Activated CD4-positive, alpha-beta memory T cell treated with anti-CD3 and anti-CD28 coated beads for 36 hours (primary cell): ENCODE measurements at regions of chr12 and their contacts with region 1.

Region 1: GRCh38 chr12:63068857-63069442 is 82.1 kb downstream of the AVPR1A start:
- DNase-seq: no peak
- H3K4me3 Mint-ChIP-seq: no peak overlapping the region
- H3K27ac Mint-ChIP-seq: no peak overlapping the region
- H3K4me1 Mint-ChIP-seq: no peaks in the 10 kb centered on the region
- H3K27me3 Mint-ChIP-seq: no peaks in the 10 kb centered on the region

Region 2: GRCh38 chr12:62813031-62813829 is 255.7 kb before region 1 on chr12:
- CTCF ChIA-PET with region 1: interaction called, 4 read pairs
- POLR2A ChIA-PET with region 1: no interaction called
- intact Hi-C with region 1: loop called (anchors 5 kb)
- DNase-seq: peak; percentile 53
- H3K4me3 Mint-ChIP-seq: no peak overlapping the region
- H3K27ac Mint-ChIP-seq: no peak overlapping the region
- H3K4me1 Mint-ChIP-seq: peaks cover 11% of the 10 kb centered on the region
- H3K27me3 Mint-ChIP-seq: peaks cover 17% of the 10 kb centered on the region

Region 3: GRCh38 chr12:63103494-63104131 is 34.7 kb after region 1 on chr12:
- CTCF ChIA-PET with region 1: no interaction called
- POLR2A ChIA-PET with region 1: no interaction called
- intact Hi-C with region 1: no loop called
- DNase-seq: no peak
- H3K4me3 Mint-ChIP-seq: no peak overlapping the region
- H3K27ac Mint-ChIP-seq: no peak overlapping the region
- H3K4me1 Mint-ChIP-seq: no peaks in the 10 kb centered on the region
- H3K27me3 Mint-ChIP-seq: no peaks in the 10 kb centered on the region

Region 4: DNA sequence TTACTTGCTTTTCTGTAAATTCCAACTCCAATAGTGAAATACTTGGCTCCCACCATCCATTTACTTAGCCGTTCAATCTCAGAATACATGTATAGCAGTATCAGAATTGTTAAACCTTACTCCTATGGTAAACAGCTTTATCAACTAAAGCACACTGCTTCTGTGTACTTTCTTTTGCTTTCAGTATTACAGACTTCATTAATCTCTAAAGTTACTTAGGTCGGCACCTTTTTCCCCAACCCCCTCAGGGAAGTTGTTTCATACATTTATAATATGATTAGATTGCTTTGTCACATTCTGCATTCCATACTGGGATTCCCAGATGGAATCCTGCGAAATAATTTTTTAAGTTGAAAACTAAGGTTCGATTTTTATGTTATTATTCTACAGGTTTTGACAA is 69.5 kb after region 1 on chr12:
- CTCF ChIA-PET with region 1: no interaction called
- POLR2A ChIA-PET with region 1: no interaction called
- intact Hi-C with region 1: no loop called
- DNase-seq: no peak
- H3K4me3 Mint-ChIP-seq: no peak overlapping the region
- H3K27ac Mint-ChIP-seq: no peak overlapping the region
- H3K4me1 Mint-ChIP-seq: no peaks in the 10 kb centered on the region
- H3K27me3 Mint-ChIP-seq: no peaks in the 10 kb centered on the region